HCT116 (cell line): ENCODE measurements at regions of chr9 and their contacts with region 1.

Region 1: DNA sequence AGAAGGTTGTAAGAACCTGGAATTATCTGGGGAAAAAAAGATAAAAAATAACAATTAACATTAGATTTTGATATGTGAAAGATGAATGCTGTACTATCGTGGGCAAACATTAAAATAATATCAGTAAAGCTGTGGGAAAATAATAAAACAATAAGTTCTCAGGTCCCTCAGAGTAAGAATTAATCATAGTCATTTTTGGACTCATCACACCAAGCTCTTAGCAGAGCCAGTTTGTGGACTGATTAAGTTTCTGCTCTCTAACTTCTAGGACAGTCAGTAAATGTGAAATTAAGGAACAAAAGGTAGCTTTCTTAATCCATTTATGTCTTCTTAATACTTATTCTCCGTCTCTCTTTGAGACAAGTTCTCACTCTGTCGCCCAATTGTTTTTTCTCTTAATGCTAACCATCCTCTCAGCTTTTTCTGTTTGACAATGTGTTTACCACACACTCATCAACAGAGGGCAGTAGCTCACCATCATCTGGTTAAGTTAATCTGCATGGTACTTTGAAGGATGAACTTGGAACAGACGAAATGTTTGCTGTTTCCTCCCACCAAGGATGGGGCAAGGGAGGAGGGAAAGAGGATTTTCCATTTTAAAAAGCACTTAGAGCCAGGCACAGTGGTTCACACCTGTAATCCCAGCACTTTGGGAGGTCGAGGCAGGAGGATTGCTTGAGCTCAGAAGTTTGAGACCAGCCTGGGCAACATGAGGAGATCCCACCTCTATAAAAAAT is 5.3 kb upstream of the ACO1 start:
- DNase-seq: peak; percentile 67
- ATAC-seq: peak; percentile 79
- H3K4me3 ChIP-seq: no peak overlapping the region
- H3K27ac ChIP-seq: no peak overlapping the region
- H3K4me1 ChIP-seq: peaks cover 0 to 14% of the 10 kb centered on the region in 2 experiments; a peak in 3 of 4 replicates
- H3K27me3 ChIP-seq: no peaks in the 10 kb centered on the region
- CTCF ChIP-seq: peak; percentile 77 to 94 (median 86)
- POLR2A ChIP-seq: no peak
- RAD21 ChIP-seq: peak; percentile 95

Region 2: GRCh38 chr9:32431940-32432555 is 52.9 kb after region 1 on chr9:
- CTCF ChIA-PET with region 1: interaction called, 26 read pairs
- POLR2A ChIA-PET with region 1: no interaction called
- RAD21 ChIA-PET with region 1: interaction called in 1 of 2 experiments, 3 read pairs
- intact Hi-C with region 1: loop called (anchors 1 kb)
- DNase-seq: peak; percentile 13
- ATAC-seq: peak; percentile 82
- H3K4me3 ChIP-seq: no peak overlapping the region
- H3K27ac ChIP-seq: no peak overlapping the region
- H3K4me1 ChIP-seq: no peaks in the 10 kb centered on the region
- H3K27me3 ChIP-seq: no peaks in the 10 kb centered on the region
- CTCF ChIP-seq: peak; percentile 31 to 73 (median 66); a peak in 5 of 6 replicates
- POLR2A ChIP-seq: no peak
- RAD21 ChIP-seq: peak; percentile 32

Region 3: GRCh38 chr9:32552172-32552872 is 173.2 kb after region 1 on chr9 and contains the starts of genes SMIM27 and TOPORS:
- CTCF ChIA-PET with region 1: interaction called, 16 read pairs
- POLR2A ChIA-PET with region 1: no interaction called
- RAD21 ChIA-PET with region 1: interaction called in 1 of 2 experiments, 3 read pairs
- intact Hi-C with region 1: no loop called
- DNase-seq: peak; percentile 84
- ATAC-seq: peak; percentile 89
- H3K4me3 ChIP-seq: peak within 1 kb of the TSS; percentile 61 to 83
- H3K27ac ChIP-seq: peak within 1 kb of the TSS; percentile 83
- H3K4me1 ChIP-seq: peaks cover 8 to 22% of the 10 kb centered on the region in 2 experiments
- H3K27me3 ChIP-seq: no peaks in the 10 kb centered on the region
- CTCF ChIP-seq: no peak
- POLR2A ChIP-seq: peak; percentile 88
- RAD21 ChIP-seq: no peak
- total RNA-seq, gene SMIM27: 8.1 TPM
- total RNA-seq, gene TOPORS: 12.7 TPM

Region 4: GRCh38 chr9:32579706-32580331 is 200.7 kb after region 1 on chr9:
- CTCF ChIA-PET with region 1: interaction called, 553 read pairs
- POLR2A ChIA-PET with region 1: interaction called, 24 read pairs
- RAD21 ChIA-PET with region 1: interaction called, 33 to 38 read pairs
- intact Hi-C with region 1: loop called (anchors 1 kb)
- DNase-seq: peak; percentile 48
- ATAC-seq: peak; percentile 49; the same call in 1 of the 2 replicates
- H3K4me3 ChIP-seq: no peak overlapping the region
- H3K27ac ChIP-seq: no peak overlapping the region
- H3K4me1 ChIP-seq: no peaks in the 10 kb centered on the region
- H3K27me3 ChIP-seq: no peaks in the 10 kb centered on the region
- CTCF ChIP-seq: peak; percentile 85 to 94 (median 91)
- POLR2A ChIP-seq: no peak
- RAD21 ChIP-seq: peak; percentile 83

Region 5: GRCh38 chr9:32703635-32704034 is 324.5 kb after region 1 on chr9:
- CTCF ChIA-PET with region 1: interaction called, 3 read pairs
- POLR2A ChIA-PET with region 1: no interaction called
- RAD21 ChIA-PET with region 1: no interaction called
- intact Hi-C with region 1: loop called (anchors 2 kb)
- DNase-seq: no peak
- ATAC-seq: peak; percentile 78
- H3K4me3 ChIP-seq: no peak overlapping the region
- H3K27ac ChIP-seq: no peak overlapping the region
- H3K4me1 ChIP-seq: peaks cover 6 to 9% of the 10 kb centered on the region in 2 experiments; a peak in 3 of 4 replicates
- H3K27me3 ChIP-seq: peaks cover 15% of the 10 kb centered on the region; the same call in 1 of the 2 replicates
- CTCF ChIP-seq: peak; percentile 52 to 57 (median 56); a peak in 5 of 6 replicates
- POLR2A ChIP-seq: no peak
- RAD21 ChIP-seq: peak; percentile 65